Psoas muscle (tissue), 8 donors: ENCODE measurements at regions of chr4 and their contacts with region 1.

Region 1: GRCh38 chr4:119628308-119629141 is at the start of gene PDE5A:
- DNase-seq: peak; percentile 78 to 90
- ATAC-seq: peak; percentile 88 to 91 (median 91)
- H3K4me3 ChIP-seq: peak within 1 kb of the TSS; percentile 92
- H3K27ac ChIP-seq: peak within 1 kb of the TSS; percentile 85
- H3K4me1 ChIP-seq: peaks cover 5% of the 10 kb centered on the region
- H3K27me3 ChIP-seq: no peaks in the 10 kb centered on the region
- CTCF ChIP-seq: peak; percentile 79
- total RNA-seq, gene PDE5A: 4.4 to 21.1 (median 7.4) TPM

Region 2: DNA sequence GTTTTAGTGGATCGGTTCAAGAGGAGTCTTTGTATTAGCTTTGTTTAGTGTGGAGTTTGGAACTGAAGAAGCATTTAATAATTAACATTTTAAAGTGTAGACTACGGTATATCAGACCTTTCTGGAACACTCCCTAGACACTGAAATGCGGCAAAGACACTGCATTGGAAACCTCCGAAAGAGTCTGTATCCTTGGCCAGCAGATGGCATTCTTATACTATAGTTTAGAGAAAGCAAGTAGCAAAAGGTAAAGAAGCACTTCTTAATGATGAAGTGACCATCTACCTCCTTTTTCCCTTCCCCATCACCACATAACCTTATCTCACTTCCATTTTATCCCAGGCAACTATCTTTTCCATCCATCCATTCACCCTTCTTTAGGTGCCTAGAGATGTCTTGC is 314.2 kb before region 1 on chr4:
- intact Hi-C with region 1: loop called (anchors 5 to 10 kb)
- DNase-seq: no peak
- ATAC-seq: peak in 2 of 4 donors; percentile 64 to 78
- H3K4me3 ChIP-seq: no peak overlapping the region
- H3K27ac ChIP-seq: no peak overlapping the region
- H3K4me1 ChIP-seq: no peaks in the 10 kb centered on the region
- H3K27me3 ChIP-seq: no peaks in the 10 kb centered on the region
- CTCF ChIP-seq: peak; percentile 48

Region 3: GRCh38 chr4:119559044-119559647 is 69.4 kb before region 1 on chr4:
- intact Hi-C with region 1: loop called (anchors 2 to 5 kb)
- DNase-seq: no peak
- ATAC-seq: peak in 1 of 4 donors; percentile 76
- H3K4me3 ChIP-seq: no peak overlapping the region
- H3K27ac ChIP-seq: no peak overlapping the region
- H3K4me1 ChIP-seq: no peaks in the 10 kb centered on the region
- H3K27me3 ChIP-seq: no peaks in the 10 kb centered on the region
- CTCF ChIP-seq: peak; percentile 57

Region 4: GRCh38 chr4:119604266-119604665 is 24.3 kb before region 1 on chr4:
- intact Hi-C with region 1: no loop called
- DNase-seq: no peak
- ATAC-seq: no peak
- H3K4me3 ChIP-seq: no peak overlapping the region
- H3K27ac ChIP-seq: no peak overlapping the region
- H3K4me1 ChIP-seq: peaks cover 16% of the 10 kb centered on the region
- H3K27me3 ChIP-seq: no peaks in the 10 kb centered on the region
- CTCF ChIP-seq: no peak

Region 5: GRCh38 chr4:119774840-119775239 is 146.3 kb after region 1 on chr4:
- intact Hi-C with region 1: no loop called
- DNase-seq: no peak
- ATAC-seq: no peak
- H3K4me3 ChIP-seq: no peak overlapping the region
- H3K27ac ChIP-seq: no peak overlapping the region
- H3K4me1 ChIP-seq: no peaks in the 10 kb centered on the region
- H3K27me3 ChIP-seq: no peaks in the 10 kb centered on the region
- CTCF ChIP-seq: no peak

Region 6: GRCh38 chr4:119810001-119810400 is 181.5 kb after region 1 on chr4:
- intact Hi-C with region 1: no loop called
- DNase-seq: no peak
- ATAC-seq: no peak
- H3K4me3 ChIP-seq: no peak overlapping the region
- H3K27ac ChIP-seq: no peak overlapping the region
- H3K4me1 ChIP-seq: no peaks in the 10 kb centered on the region
- H3K27me3 ChIP-seq: no peaks in the 10 kb centered on the region
- CTCF ChIP-seq: no peak

Region 7: GRCh38 chr4:120317713-120318112 is 689.2 kb after region 1 on chr4:
- intact Hi-C with region 1: no loop called
- DNase-seq: no peak
- ATAC-seq: no peak
- H3K4me3 ChIP-seq: no peak overlapping the region
- H3K27ac ChIP-seq: no peak overlapping the region
- H3K4me1 ChIP-seq: no peaks in the 10 kb centered on the region
- H3K27me3 ChIP-seq: no peaks in the 10 kb centered on the region
- CTCF ChIP-seq: no peak